Gastrocnemius medialis (tissue), 4 donors: ENCODE measurements at regions of chr9 and their contacts with region 1.

Region 1: GRCh38 chr9:35829084-35829763 is at the start of gene TMEM8B:
- DNase-seq: peak; percentile 96 to 97
- ATAC-seq: peak; percentile 92 to 93
- H3K4me3 ChIP-seq: peak within 1 kb of the TSS; percentile 68 to 96 (median 90)
- H3K27ac ChIP-seq: peak within 1 kb of the TSS; percentile 88 to 98 (median 98)
- H3K4me1 ChIP-seq: peaks cover 32 to 53% of the 10 kb centered on the region in 2 donors
- H3K27me3 ChIP-seq: no peaks in the 10 kb centered on the region
- CTCF ChIP-seq: no peak
- POLR2A ChIP-seq: peak; percentile 53 to 67
- total RNA-seq, gene TMEM8B: 1.9 to 6.4 (median 6.1) TPM

Region 2: DNA sequence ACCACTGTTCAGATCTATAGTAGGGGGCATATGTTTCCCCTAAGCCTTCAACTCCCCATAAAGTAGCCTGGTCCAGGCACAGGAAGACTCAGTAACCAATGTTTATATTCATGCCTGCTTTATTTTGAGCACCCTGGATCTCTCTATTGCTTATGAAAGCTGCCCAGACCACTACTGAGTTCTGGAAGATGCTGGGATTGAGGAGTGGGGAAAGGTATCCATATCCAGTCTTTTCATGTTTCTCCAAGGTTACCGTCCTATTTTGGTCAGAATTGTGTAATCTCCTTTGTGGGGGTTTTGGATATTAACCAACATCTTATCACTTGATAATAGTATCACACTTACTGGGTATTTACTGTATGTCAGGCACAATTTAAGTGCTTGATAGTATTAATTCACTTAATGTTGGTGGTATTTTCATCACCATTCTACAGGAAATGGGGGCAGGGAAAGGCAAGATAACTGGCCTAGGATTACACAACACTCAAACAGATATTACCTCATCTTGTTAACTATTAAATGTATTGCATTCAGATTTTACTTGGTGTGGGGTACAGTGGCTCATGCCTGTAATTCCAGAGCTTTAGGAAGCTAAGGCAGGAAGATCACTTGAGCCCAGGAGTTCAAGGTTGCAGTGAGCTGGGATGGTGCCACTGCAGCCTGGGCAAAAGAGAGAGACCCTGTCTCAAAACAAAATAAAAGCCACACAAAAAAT is 303.0 kb before region 1 on chr9:
- in situ Hi-C with region 1: no loop called
- intact Hi-C with region 1: no loop called
- DNase-seq: no peak
- ATAC-seq: no peak
- H3K4me3 ChIP-seq: no peak overlapping the region
- H3K27ac ChIP-seq: peak overlapping the region; percentile 61 to 76 (median 62)
- H3K4me1 ChIP-seq: peaks cover 51 to 62% of the 10 kb centered on the region in 2 donors
- H3K27me3 ChIP-seq: no peaks in the 10 kb centered on the region
- CTCF ChIP-seq: no peak
- POLR2A ChIP-seq: no peak

Region 3: GRCh38 chr9:35748858-35749514 is 80.2 kb before region 1 on chr9 and contains the starts of genes GBA2 and RGP1:
- in situ Hi-C with region 1: no loop called
- intact Hi-C with region 1: loop called (anchors 1 kb)
- DNase-seq: peak; percentile 71 to 87
- ATAC-seq: peak; percentile 81 to 85
- H3K4me3 ChIP-seq: peak within 1 kb of the TSS; percentile 81 to 99 (median 85)
- H3K27ac ChIP-seq: peak within 1 kb of the TSS; percentile 88 to 97 (median 94)
- H3K4me1 ChIP-seq: peaks cover 41 to 45% of the 10 kb centered on the region in 2 donors
- H3K27me3 ChIP-seq: no peaks in the 10 kb centered on the region
- CTCF ChIP-seq: no peak
- POLR2A ChIP-seq: peak; percentile 88 to 95
- total RNA-seq, gene GBA2: 47.3 to 63.2 (median 51.4) TPM
- total RNA-seq, gene RGP1: 22.0 to 41.1 (median 36.3) TPM

Region 4: GRCh38 chr9:35814841-35815543 is 14.2 kb before region 1 on chr9 and contains the start of gene HINT2:
- in situ Hi-C with region 1: no loop called
- intact Hi-C with region 1: loop called (anchors 1 kb)
- DNase-seq: peak; percentile 95 to 98
- ATAC-seq: peak; percentile 87 to 95
- H3K4me3 ChIP-seq: peak within 1 kb of the TSS; percentile 78 to 93 (median 84)
- H3K27ac ChIP-seq: peak within 1 kb of the TSS; percentile 95 to 98 (median 96)
- H3K4me1 ChIP-seq: peaks cover 30 to 34% of the 10 kb centered on the region in 2 donors
- H3K27me3 ChIP-seq: no peaks in the 10 kb centered on the region
- CTCF ChIP-seq: peak in 1 of 5 experiments; percentile 3
- POLR2A ChIP-seq: peak; percentile 92 to 94
- total RNA-seq, gene HINT2: 4.5 to 26.7 (median 22.0) TPM

Region 5: DNA sequence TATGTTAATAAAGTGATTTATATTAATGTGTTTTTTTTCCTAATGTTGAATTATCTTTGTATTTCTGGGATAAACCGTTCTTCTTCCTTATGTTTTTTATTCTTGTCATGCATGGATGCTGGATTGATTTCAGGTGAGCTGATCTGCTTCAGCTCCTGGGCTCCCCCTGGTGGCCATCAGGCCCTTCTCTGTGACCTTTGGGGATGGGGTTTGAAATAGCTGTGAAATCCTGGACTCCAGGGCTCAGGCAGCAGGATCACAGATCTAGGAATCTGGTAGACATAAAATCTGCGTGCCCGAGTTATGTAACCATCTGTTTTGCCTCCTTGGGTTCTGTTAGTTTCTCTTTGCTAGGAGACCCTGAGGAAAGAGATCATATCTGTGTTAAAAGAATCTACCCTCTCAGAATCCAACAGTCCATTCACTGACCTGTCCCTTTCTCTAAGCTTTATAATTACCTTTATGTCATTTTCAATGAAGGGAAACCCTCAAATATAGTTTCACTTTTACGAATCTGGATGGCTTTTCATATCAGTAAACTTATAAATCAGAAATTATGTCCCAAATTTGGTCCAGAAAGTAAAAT is 53.1 kb after region 1 on chr9:
- in situ Hi-C with region 1: no loop called
- intact Hi-C with region 1: loop called (anchors 5 kb)
- DNase-seq: peak; percentile 57 to 77
- ATAC-seq: peak; percentile 90 to 92
- H3K4me3 ChIP-seq: no peak overlapping the region
- H3K27ac ChIP-seq: no peak overlapping the region
- H3K4me1 ChIP-seq: no peaks in the 10 kb centered on the region
- H3K27me3 ChIP-seq: no peaks in the 10 kb centered on the region
- CTCF ChIP-seq: peak; percentile 88 to 98 (median 92)
- POLR2A ChIP-seq: no peak

Region 6: DNA sequence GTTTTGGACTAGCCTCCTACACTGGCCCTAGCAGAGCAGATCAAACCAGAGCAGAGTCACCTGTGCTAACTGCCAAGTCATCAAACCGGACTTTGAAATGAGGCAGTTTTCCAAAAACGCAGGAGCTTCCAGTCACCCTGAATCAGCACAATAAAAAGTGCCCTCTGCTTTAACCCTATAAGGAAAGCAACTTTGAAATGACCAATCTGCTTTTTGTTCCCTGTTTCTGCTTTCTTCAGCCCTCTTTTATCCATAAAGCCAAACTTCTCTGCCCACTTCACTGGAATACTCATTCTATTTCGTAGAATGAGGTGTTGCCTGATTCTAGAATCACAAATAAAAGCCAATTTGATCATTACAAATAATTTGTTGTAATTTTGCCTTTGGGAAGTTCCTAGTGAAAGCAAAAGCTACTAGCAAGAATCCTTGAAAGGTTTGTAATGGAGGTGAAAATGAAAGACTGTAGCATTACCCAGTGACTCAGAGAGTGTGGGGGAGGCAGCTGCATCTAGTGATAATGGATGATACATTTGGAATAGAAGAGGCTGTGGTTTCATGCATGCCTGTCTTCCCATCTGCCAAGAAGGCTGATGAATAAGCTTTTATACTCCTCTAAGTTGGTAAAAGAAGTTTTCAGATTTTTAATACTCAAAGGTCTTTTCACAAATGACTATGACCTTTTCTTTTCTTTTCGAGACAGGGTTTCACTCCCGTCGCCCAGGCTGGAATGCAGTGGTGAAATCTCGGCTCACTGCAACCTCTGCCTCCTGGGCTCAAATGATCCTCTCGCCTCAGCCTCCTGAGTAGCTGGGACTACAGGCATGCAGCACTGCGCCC is 94.9 kb after region 1 on chr9:
- in situ Hi-C with region 1: no loop called
- intact Hi-C with region 1: no loop called
- DNase-seq: no peak
- ATAC-seq: peak; percentile 42 to 62
- H3K4me3 ChIP-seq: no peak overlapping the region
- H3K27ac ChIP-seq: peak overlapping the region; percentile 18 to 62 (median 62)
- H3K4me1 ChIP-seq: peaks cover 0 to 24% of the 10 kb centered on the region in 2 donors
- H3K27me3 ChIP-seq: no peaks in the 10 kb centered on the region
- CTCF ChIP-seq: no peak
- POLR2A ChIP-seq: no peak